Cardiac septum (tissue), 1 donor: ENCODE measurements at regions of chr7 and their contacts with region 1.

Region 1: DNA sequence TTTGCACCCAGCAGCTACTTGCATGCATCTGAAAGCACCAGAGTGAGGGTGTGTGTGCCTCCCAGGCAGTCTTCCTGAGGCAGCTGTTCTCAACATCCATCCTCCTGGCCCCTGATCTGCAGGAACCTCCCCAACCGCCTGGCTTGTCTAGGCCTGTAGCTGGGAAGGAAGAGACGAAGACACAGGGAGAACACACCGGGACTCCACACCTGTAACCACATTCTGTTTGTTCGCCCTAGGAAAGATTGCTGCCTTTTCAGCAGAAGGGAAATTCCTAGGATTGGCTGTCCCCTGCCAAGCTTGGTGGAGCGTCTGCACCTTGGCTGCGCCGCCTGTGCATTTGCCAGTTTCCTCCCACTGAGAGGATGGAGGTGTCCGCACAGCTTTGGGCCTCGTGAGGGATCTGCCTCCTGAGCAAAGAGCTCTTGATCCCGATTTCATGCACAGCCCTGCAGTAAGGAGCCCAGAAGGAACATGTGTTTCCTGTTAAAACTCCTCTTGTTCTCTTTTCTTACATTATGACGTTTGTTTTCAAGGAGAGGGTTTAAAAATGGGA is 154.6 kb downstream of the TPST1 start:
- DNase-seq: no peak

Region 2: DNA sequence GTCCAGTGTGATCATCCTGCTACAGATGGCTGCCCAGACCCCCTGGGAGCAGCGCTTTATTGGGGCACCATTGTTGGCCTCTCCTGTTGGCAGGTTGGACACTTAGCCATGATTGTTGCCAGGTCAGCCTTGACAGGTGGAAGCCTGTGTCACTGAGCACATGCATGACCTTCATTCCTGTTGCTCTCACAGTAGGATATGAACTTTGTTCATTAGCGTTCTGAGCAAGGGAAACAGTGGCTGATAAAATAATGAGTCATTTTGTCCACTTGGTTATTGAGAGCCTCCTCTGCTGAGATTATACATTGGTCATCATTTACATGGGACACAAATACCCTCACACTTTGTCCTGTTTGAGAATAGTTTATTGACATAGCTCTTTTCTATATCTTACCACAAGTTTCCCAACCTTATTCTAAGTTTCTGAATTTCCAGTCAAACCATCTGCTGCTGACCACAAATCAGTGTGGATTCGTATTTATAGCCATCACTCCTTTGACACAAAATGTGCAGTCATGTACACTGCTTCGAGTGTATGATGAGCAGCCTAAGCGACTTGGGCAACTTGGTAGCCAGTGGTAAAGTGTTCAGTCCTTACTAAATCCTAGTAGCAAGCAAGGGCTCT is 52.0 kb before region 1 on chr7:
- intact Hi-C with region 1: loop called (anchors 10 kb)
- DNase-seq: no peak

Region 3: GRCh38 chr7:66542528-66543269 is 183.0 kb after region 1 on chr7:
- intact Hi-C with region 1: no loop called
- DNase-seq: no peak